Activated CD4-positive, alpha-beta T cell treated with anti-CD3 and anti-CD28 coated beads, Interleukin-2, amount 10 ng/mL, durations not matched to agents 24 days and 14 days (primary cell): ENCODE measurements at regions of chr1 and their contacts with region 1.

Region 1: DNA sequence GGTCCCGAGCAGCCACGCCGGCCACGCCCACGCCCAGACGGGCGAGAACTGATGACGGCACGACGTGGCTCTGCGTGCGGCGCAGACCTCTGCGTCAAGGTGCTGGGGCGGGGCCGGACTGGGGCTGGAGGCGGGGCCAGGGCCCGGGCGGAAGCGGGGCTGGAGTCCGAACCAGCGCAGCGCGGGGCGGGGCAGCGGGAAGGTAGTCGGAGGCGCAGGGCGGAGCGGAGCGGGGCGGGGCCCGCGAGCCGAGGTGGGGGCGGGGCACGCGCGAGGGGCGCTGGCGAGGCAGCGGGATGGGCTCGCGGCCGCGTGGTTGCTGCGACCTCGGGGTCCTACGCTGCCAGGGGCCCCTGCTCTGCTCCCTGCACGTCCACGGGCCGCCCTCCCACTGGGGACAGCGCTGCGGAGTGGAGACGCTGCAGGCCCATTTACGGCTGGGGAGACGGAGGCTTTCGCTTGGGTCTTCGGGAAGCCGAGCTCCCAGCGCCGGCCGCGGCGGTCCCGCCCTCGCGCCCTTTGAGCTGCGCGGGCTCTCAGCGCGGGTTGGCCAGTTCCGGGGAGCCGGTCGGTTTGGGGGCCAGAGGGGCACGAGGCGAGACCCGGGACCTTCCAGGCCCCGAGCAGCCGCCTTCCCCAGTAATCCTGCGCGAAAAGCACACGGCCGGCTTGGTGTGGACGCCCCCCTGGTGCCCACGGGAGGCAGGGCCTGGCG is at the start of gene PEX10:
- DNase-seq: peak; percentile 100
- H3K4me3 Mint-ChIP-seq: peak within 1 kb of the TSS; percentile 94
- H3K27ac Mint-ChIP-seq: peak within 1 kb of the TSS; percentile 95
- H3K4me1 Mint-ChIP-seq: peaks cover 27% of the 10 kb centered on the region
- H3K27me3 Mint-ChIP-seq: no peaks in the 10 kb centered on the region
- total RNA-seq, gene PEX10: 22.3 and 24.2 TPM in 2 replicates

Region 2: GRCh38 chr1:2391041-2391930 is 21.4 kb before region 1 on chr1 and contains the starts of genes MORN1 and RER1:
- intact Hi-C with region 1: loop called (anchors 1 kb)
- DNase-seq: peak; percentile 100
- H3K4me3 Mint-ChIP-seq: peak within 1 kb of the TSS; percentile 90
- H3K27ac Mint-ChIP-seq: peak within 1 kb of the TSS; percentile 68
- H3K4me1 Mint-ChIP-seq: peaks cover 23% of the 10 kb centered on the region
- H3K27me3 Mint-ChIP-seq: no peaks in the 10 kb centered on the region
- total RNA-seq, gene MORN1: 9.0 and 11.1 TPM in 2 replicates
- total RNA-seq, gene RER1: 164 and 171 TPM in 2 replicates

Region 3: DNA sequence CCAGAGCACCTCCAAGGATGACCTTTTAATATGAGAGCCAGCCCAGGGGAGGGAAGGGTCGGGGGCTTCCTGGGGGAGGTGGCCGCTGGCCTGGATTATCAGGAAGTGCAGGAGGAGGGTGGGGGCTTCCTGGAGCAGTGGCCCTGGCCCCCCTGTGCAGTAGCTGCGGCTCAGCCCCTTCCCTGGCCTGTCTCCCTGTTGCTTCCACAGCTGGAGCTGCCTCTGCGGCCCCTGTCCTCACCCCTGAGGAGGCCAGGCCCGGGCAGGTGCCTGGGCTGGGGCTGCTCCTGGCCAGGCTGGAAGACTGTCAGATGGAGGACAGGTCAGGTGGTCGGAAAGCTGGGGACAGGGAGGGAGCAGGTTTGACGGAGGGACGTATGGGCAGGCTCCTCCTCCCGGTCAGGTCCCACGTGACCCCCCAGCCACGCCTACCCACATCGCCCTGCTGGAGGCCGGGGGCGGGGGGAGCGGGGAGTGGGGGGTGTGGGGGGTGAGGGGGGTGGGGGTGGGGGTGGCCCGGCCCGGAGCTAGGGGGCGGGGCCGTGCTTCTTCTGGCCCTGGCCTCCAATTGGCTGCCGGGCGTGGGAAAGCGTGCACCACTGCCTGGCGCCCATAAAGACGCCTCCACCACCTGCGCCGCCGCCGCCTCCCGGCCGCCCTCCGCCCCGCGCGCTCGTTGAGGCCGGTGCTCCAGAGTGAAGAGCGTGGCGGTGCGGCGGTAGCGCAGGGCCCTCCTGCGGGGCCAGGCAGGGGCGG is 133.3 kb after region 1 on chr1:
- intact Hi-C with region 1: loop called (anchors 1 kb)
- DNase-seq: peak; percentile 97
- H3K4me3 Mint-ChIP-seq: peak overlapping the region; percentile 93
- H3K27ac Mint-ChIP-seq: peak overlapping the region; percentile 95
- H3K4me1 Mint-ChIP-seq: peaks cover 11% of the 10 kb centered on the region
- H3K27me3 Mint-ChIP-seq: peaks cover 8% of the 10 kb centered on the region

Region 4: GRCh38 chr1:2642560-2643413 is 230.1 kb after region 1 on chr1:
- intact Hi-C with region 1: loop called (anchors 5 kb)
- DNase-seq: peak; percentile 98
- H3K4me3 Mint-ChIP-seq: peak overlapping the region; percentile 92
- H3K27ac Mint-ChIP-seq: peak overlapping the region; percentile 91
- H3K4me1 Mint-ChIP-seq: peaks cover 3% of the 10 kb centered on the region
- H3K27me3 Mint-ChIP-seq: no peaks in the 10 kb centered on the region

Region 5: DNA sequence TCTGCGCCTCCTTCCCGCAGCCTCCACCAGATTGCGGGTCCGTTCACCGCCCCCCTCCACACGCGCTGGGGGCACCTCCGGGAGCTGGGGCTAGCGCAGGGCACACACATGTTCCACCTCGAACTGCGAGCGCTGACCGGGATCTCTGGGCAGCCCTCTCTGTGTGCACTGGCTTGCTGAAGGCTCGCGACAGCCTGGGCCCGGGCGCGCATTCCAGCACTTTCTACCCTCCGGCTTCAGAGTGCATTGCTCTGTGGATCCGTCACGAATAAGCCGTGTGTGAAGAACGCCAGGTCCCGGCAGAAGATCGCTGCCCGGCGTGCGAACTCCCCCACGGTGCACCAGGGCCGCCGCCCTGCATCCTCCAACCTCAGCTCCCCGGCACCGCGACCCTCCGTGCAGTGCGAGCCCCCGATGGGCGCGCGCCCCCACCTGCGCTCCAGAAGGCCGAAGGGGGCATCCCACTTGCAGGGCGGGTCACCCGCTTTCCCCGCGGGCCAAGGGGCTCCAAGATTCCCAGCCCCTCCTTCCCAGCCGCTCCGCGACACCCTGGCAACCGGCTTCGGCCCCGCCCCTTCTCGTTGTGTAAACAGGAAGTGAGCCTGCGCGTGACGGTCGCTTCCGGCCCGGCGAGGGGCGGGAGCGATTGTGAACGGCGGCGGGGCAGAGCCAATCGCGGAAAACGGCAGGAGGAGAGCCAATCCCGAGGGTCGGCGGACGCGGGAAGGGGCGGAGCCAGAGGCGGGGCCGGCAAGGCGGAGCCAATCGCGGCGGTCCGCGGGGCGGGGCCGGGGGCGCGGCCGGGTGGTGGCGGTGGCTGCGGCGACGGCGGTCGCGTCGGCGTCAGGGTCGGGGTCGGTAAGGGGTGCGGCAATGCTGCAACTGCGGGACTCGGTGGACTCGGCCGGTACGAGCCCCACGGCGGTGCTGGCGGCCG is 1211.8 kb after region 1 on chr1 and contains the start of gene TPRG1L:
- intact Hi-C with region 1: loop called (anchors 10 kb)
- DNase-seq: peak; percentile 100
- H3K4me3 Mint-ChIP-seq: peak within 1 kb of the TSS; percentile 94
- H3K27ac Mint-ChIP-seq: peak within 1 kb of the TSS; percentile 70
- H3K4me1 Mint-ChIP-seq: peaks cover 25% of the 10 kb centered on the region
- H3K27me3 Mint-ChIP-seq: peaks cover 5% of the 10 kb centered on the region
- total RNA-seq, gene TPRG1L: 8.6 and 9.7 TPM in 2 replicates